ENCODE measurements at regions of chr3 and their contacts with region 1.

Region 1: DNA sequence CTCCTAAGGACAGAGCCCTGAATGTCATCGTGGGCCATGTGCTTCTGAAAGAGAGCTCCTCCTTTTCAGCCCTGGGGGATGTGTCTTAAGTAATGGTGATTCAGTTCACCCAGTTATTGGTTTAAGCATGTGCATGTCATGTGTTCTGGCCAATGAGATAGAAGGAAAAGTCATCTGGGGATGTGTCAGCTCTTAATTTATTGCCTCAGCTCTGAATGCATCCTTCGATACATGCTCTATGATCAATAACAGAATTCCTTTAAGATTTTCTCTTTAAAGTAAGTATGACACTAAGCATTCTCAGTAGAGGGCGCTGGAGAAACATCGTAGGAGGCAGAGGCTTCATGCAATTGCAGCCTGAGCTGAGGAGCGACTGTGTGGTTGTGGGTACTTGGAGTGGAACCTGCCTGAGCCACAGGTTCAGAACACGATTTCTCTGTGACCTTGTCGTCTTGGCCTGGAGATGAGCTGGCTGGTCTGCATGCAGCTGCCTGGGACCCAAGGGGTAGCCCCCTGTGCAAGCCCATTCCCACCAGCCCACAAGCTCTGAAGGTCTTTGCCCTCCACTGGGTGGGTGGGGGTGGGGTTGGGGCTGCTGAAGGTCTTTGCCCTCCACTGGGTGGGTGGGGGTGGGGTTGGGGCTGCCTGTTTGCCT is 69.5 kb downstream of the C3orf38 start:
- DNase-seq: peak; percentile 92
- H3K4me3 ChIP-seq: no peak overlapping the region
- H3K27ac ChIP-seq: no peak overlapping the region
- H3K4me1 ChIP-seq: peaks cover 46% of the 10 kb centered on the region
- H3K27me3 ChIP-seq: no peaks in the 10 kb centered on the region
- CTCF ChIP-seq: peak; percentile 84

Region 2: DNA sequence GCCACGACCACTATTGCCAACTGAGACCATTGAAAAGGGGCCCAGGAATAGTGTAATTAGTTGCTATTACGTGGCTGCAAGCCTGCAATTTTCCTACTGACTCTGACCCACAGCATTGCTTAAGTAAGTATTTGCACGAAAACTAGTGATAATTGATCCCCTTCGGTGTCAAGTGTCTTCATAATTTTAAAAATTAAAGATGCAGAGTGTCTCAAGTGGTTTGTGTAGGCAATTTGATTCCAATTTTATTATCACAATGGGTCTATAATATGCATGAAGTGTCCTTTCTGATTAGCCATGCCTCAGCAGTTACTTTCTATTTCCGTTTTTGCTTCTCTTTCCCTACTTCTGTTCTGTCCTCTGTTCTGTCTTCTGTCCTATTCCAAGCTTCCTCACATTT is 189.7 kb after region 1 on chr3:
- CTCF ChIA-PET with region 1: no interaction called
- POLR2A ChIA-PET with region 1: no interaction called
- intact Hi-C with region 1: loop called (anchors 5 kb)
- DNase-seq: peak; percentile 55
- H3K4me3 ChIP-seq: peak overlapping the region; percentile 9
- H3K27ac ChIP-seq: no peak overlapping the region
- H3K4me1 ChIP-seq: peaks cover 30% of the 10 kb centered on the region
- H3K27me3 ChIP-seq: no peaks in the 10 kb centered on the region
- CTCF ChIP-seq: no peak

Region 3: DNA sequence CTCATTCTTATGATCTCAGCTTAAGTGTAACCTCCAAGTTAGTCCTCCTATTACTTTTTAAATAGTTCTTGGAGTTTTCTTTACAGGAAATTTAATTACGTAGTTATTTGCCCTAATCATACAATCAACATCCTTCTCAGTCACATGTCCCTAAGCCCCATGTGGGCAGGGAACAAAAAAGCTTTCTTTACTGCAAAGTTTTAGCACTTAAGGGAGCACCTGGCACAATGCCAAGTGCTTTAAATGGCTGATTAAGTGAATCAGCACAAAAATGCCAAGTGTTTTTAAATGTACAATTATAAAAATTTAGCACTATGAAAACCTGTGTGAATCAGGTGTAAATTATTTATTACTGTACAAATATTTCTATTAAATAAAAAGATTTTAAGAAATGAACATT is 375.8 kb after region 1 on chr3:
- CTCF ChIA-PET with region 1: no interaction called
- POLR2A ChIA-PET with region 1: no interaction called
- intact Hi-C with region 1: loop called (anchors 2 kb)
- DNase-seq: peak; percentile 94
- H3K4me3 ChIP-seq: no peak overlapping the region
- H3K27ac ChIP-seq: peak overlapping the region; percentile 17
- H3K4me1 ChIP-seq: peaks cover 13% of the 10 kb centered on the region
- H3K27me3 ChIP-seq: no peaks in the 10 kb centered on the region
- CTCF ChIP-seq: no peak

Region 4: DNA sequence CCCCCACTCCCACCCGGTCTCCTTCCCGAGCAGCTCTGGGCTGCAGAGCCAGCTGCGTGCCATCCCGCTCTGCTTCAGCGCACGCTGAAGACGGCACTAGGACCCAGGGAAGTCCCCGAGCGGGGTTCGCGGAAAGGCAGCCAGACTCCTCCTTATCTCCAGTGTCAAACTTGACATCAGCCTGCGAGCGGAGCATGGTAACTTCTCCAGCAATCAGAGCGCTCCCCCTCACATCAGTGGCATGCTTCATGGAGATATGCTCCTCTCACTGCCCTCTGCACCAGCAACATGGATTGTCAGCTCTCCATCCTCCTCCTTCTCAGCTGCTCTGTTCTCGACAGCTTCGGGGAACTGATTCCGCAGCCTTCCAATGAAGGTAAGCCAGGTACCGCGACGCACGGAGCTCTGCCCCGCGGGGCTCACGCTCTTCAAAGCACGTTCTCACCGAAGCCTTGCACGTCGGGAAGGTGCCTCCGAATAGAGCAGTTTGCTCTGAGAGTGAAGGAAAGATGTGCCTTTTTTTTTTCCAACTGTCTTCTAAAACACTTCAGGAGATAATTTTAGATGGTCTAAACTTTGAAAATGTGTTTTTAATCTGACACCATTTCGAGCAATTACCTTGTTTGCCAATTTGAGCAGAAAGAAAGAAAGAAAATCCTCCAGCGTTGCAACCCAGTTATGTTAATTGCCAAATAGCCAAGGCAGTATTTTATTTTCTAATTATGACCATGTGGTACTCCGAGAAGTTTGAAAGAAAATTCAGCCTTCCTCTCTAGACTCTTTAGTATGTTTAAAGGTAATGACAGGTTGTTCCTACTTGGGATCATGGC is 888.4 kb after region 1 on chr3 and contains the start of gene EPHA3:
- CTCF ChIA-PET with region 1: no interaction called
- POLR2A ChIA-PET with region 1: no interaction called
- intact Hi-C with region 1: loop called (anchors 2 kb)
- DNase-seq: peak; percentile 96
- H3K4me3 ChIP-seq: peak within 1 kb of the TSS; percentile 59
- H3K27ac ChIP-seq: peak within 1 kb of the TSS; percentile 19
- H3K4me1 ChIP-seq: peaks cover 40% of the 10 kb centered on the region
- H3K27me3 ChIP-seq: no peaks in the 10 kb centered on the region
- CTCF ChIP-seq: no peak
- total RNA-seq, gene EPHA3: 21.5 and 25.7 TPM in 2 replicates

Region 5: GRCh38 chr3:89577637-89578530 is 1358.6 kb after region 1 on chr3:
- CTCF ChIA-PET with region 1: no interaction called
- POLR2A ChIA-PET with region 1: no interaction called
- intact Hi-C with region 1: loop called (anchors 5 kb)
- DNase-seq: peak; percentile 92
- H3K4me3 ChIP-seq: no peak overlapping the region
- H3K27ac ChIP-seq: peak overlapping the region; percentile 68
- H3K4me1 ChIP-seq: peaks cover 41% of the 10 kb centered on the region
- H3K27me3 ChIP-seq: no peaks in the 10 kb centered on the region
- CTCF ChIP-seq: no peak